ENCODE measurements at regions of chr12 and their contacts with region 1.

Region 1: GRCh38 chr12:106586803-106587684 is 4.2 kb downstream of the RFX4 start:
- DNase-seq: no peak
- H3K4me3 Mint-ChIP-seq: no peak overlapping the region
- H3K27ac Mint-ChIP-seq: no peak overlapping the region
- H3K4me1 Mint-ChIP-seq: peaks cover 8% of the 10 kb centered on the region
- H3K27me3 Mint-ChIP-seq: peaks cover 70% of the 10 kb centered on the region

Region 2: GRCh38 chr12:106386813-106387535 is 200.1 kb before region 1 on chr12:
- intact Hi-C with region 1: loop called (anchors 5 kb)
- DNase-seq: no peak
- H3K4me3 Mint-ChIP-seq: no peak overlapping the region
- H3K27ac Mint-ChIP-seq: no peak overlapping the region
- H3K4me1 Mint-ChIP-seq: no peaks in the 10 kb centered on the region
- H3K27me3 Mint-ChIP-seq: no peaks in the 10 kb centered on the region

Region 3: DNA sequence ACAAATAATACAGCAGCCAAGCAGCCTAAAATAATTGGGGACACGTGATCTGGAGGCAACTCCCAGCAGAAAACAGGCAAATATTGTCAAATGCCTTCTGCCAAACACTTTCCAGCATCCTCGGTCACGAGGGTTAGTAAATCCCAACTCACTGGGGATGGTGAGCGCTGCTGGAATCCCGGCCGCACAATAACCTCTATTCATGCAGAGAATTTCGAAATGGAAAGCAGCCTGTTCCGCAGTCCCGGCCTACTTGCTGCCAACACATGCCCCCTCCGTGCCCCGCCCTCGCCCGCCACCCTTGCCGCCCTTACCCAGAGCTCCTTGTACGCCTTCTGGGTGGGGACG is 58.0 kb after region 1 on chr12:
- intact Hi-C with region 1: no loop called
- DNase-seq: no peak
- H3K4me3 Mint-ChIP-seq: no peak overlapping the region
- H3K27ac Mint-ChIP-seq: no peak overlapping the region
- H3K4me1 Mint-ChIP-seq: no peaks in the 10 kb centered on the region
- H3K27me3 Mint-ChIP-seq: peaks cover 5% of the 10 kb centered on the region

Measured in activated T-helper 1 cell treated with anti-CD3 and anti-CD28 coated beads, Interleukin-12 subunit alpha, Interleukin-12 subunit beta, Interleukin-2, Interleukin-4 antibody, amounts not matched to agents 30 ng/mL and 10 ng/mL and 1 ng/mL, durations not matched to agents 14 hours and 24 hours and 36 hours (primary cell).